ENCODE measurements at regions of chr10 and their contacts with region 1.

Region 1: GRCh38 chr10:15385552-15386455 is 14.7 kb upstream of the FAM171A1 start:
- DNase-seq: peak in 2 of 3 donors; percentile 29 to 49
- ATAC-seq: peak; percentile 61 to 90
- H3K4me3 ChIP-seq: no peak overlapping the region
- H3K27ac ChIP-seq: no peak overlapping the region
- H3K4me1 ChIP-seq: no peaks in the 10 kb centered on the region
- H3K27me3 ChIP-seq: no peaks in the 10 kb centered on the region

Region 2: GRCh38 chr10:15408557-15408956 is 22.8 kb after region 1 on chr10:
- intact Hi-C with region 1: loop called in 1 of 4 experiments (anchors 2 kb)
- DNase-seq: no peak
- ATAC-seq: no peak
- H3K4me3 ChIP-seq: no peak overlapping the region
- H3K27ac ChIP-seq: no peak overlapping the region
- H3K4me1 ChIP-seq: no peaks in the 10 kb centered on the region
- H3K27me3 ChIP-seq: no peaks in the 10 kb centered on the region